Transverse colon (tissue), 4 donors: ENCODE measurements at regions of chr4 and their contacts with region 1.

Region 1: DNA sequence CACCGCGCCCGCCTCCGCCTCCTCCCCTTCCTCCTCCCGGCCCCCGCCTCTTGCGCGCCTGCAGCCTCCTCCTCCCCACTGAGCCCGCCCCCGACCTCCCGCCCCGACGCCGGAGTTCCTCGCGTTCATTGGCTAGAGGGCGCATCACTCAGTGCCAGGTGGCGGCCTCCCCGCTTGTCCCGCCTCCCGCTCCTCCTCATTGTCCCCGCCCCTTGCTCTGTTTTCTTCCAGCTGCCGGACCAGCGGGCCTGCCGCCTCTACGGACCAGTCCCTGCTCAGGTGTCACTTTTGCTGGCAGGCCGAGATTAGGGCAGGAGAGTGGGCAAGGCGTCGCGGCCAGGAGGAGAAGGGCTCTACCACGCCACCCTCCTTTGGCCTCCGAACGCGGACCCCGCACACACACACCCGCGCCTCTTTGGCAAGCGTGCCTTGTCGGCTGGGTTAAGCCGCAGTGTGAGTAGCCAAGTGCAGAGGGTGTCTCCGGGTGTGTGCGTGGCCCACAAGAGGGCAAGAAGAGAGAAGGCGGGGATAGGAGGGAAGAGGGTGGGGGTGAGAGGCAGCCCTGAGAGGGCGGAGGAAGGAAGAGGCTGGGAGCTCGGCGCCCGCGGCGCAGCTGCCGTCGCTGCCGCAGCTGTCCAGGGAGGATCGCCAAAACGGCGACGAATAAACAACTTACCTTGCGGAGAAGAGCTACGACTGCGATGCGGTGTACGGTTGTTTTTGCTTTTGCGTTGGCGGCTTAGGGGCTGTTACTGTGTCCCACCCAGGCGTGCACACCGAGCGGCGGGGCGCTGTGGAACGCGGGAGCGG is 436 bp upstream of the PPP3CA start:
- DNase-seq: peak; percentile 100
- H3K4me3 ChIP-seq: peak overlapping the region; percentile 64 to 91 (median 74)
- H3K27ac ChIP-seq: peak overlapping the region; percentile 97 to 99 (median 98)
- H3K4me1 ChIP-seq: peaks cover 4 to 40% (median 19%) of the 10 kb centered on the region in 4 donors
- H3K27me3 ChIP-seq: no peaks in the 10 kb centered on the region
- CTCF ChIP-seq: peak in 2 of 5 experiments; percentile 33 to 35
- EP300 ChIP-seq: no peak
- POLR2A ChIP-seq: peak; percentile 98

Region 2: GRCh38 chr4:100591161-100591876 is 756.4 kb before region 1 on chr4:
- in situ Hi-C with region 1: no loop called
- intact Hi-C with region 1: no loop called
- DNase-seq: no peak
- H3K4me3 ChIP-seq: no peak overlapping the region
- H3K27ac ChIP-seq: no peak overlapping the region
- H3K4me1 ChIP-seq: no peaks in the 10 kb centered on the region
- H3K27me3 ChIP-seq: no peaks in the 10 kb centered on the region
- CTCF ChIP-seq: no peak
- EP300 ChIP-seq: no peak
- POLR2A ChIP-seq: no peak

Region 3: DNA sequence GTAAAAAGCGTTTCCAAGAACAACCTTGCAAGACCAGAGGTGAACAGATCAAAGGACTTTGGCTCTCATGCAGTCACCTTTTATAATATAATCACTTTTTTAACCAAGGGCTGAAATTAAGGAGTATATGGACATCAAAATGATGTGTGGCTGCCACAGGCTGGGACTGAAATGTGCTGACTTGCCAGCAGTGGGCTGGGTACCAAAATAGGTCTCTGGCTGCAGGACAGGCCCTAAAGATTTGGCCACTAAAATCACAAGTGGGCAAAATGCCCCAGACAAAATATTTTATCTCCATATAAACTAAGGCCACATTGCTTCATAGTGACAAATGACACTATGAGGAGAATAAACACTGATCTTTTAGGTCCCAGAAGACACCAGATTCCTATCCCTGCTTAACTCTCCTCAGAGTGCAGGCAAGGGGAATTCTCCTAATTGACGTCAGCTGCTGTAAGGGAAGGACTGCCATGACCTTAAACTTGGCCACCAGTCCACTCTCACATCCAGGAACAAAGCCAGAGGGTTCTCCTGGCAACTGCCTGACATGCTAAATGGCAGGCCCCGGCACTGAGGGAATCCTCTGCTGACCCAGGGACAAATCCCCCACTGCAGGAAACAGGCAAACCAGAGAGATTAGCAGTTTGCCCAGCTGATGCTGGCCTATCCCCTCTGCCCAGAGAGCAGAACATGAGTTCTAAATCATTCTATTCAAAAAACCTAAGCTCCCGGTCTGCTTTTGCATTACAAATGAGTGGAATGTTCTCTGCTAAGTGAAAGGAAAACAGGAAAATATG is 156.3 kb before region 1 on chr4:
- in situ Hi-C with region 1: no loop called
- intact Hi-C with region 1: loop called (anchors 5 kb)
- DNase-seq: peak; percentile 50
- H3K4me3 ChIP-seq: no peak overlapping the region
- H3K27ac ChIP-seq: peak overlapping the region; percentile 65 to 66 (median 66)
- H3K4me1 ChIP-seq: peaks cover 16 to 37% (median 17%) of the 10 kb centered on the region in 4 donors
- H3K27me3 ChIP-seq: no peaks in the 10 kb centered on the region
- CTCF ChIP-seq: no peak
- EP300 ChIP-seq: peak; percentile 93
- POLR2A ChIP-seq: no peak

Region 4: GRCh38 chr4:101205916-101206315 is 141.8 kb before region 1 on chr4:
- in situ Hi-C with region 1: loop called in 1 of 4 experiments (anchors 10 kb)
- intact Hi-C with region 1: no loop called
- DNase-seq: no peak
- H3K4me3 ChIP-seq: no peak overlapping the region
- H3K27ac ChIP-seq: no peak overlapping the region
- H3K4me1 ChIP-seq: peaks cover 0 to 18% (median under 1%) of the 10 kb centered on the region in 4 donors
- H3K27me3 ChIP-seq: no peaks in the 10 kb centered on the region
- CTCF ChIP-seq: no peak
- EP300 ChIP-seq: no peak
- POLR2A ChIP-seq: no peak